AG04450 (cell line): ENCODE measurements at regions of chr14 and their contacts with region 1.

Region 1: DNA sequence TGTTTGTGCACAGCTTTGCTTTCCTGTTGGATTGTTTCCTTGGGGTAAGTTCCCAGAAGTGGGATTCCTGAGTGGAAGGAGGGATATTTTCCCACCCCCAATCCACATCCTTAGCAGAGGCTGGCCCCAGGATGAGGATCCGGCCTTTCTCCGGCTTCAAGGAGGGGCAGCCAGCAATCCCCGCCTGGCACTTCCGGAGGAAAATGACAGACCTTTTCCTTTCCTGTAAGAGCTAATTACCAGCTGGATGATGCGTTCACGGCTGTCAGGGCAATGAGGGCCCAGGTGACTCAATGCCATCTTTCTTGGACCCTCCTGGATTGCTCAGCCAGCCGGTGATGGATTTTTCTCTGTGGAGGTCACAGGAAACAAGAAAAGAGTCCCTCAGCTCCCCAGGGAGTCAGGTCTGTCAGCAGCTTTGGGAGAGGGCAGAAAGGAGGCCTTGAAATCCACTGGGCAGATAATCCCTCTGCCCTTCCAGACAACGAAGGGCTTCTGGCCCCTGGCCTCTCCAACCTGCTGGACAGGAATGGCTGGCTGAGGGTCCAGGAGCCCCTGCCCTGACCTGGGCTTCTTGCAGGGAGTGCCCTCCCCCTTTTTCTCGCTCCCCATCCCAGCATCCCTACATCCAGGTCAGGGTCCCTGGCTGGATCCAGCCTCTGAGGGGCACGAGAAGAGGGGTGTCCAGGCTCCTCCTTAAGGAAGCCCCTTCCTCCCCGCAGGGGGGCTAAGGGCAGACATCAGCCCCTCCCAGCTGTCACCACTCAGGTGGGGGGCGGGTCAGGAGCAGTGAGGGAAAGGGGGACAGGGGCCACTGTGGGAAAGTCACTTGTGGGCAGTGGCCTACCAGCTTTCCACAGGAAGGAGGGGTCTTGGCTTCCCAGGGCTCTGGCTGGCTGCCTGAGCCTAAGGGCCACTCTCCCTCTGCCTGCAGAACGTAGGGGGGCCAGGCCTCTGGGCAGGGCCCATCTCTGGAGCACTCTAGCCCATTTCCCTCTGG is 16.1 kb upstream of the CCDC85C start:
- DNase-seq: no peak
- H3K4me3 ChIP-seq: no peak overlapping the region
- H3K27ac ChIP-seq: peak overlapping the region; percentile 31
- H3K27me3 ChIP-seq: no peaks in the 10 kb centered on the region
- CTCF ChIP-seq: no peak

Region 2: DNA sequence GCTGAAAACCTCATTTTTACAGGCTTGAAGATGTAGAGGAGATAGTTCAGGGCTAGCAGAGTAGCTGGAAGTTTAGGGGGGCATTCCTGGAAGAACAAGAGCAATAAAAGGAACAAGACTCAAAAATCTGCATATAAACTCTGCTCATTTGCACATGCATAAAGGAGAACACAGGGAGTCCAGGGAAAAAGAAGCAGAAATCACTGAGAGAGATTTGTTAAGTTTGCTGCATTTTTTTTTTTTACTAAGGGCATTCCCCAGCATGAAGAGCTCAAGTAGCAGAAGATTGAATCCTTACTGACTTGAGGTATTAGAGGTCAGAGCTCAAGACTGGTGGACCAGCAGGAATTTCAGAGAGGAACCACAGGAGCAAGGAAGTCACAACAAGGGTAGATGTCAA is 319.9 kb before region 1 on chr14:
- CTCF ChIA-PET with region 1: no interaction called
- POLR2A ChIA-PET with region 1: no interaction called
- DNase-seq: no peak
- H3K4me3 ChIP-seq: no peak overlapping the region
- H3K27ac ChIP-seq: no peak overlapping the region
- H3K27me3 ChIP-seq: no peaks in the 10 kb centered on the region
- CTCF ChIP-seq: no peak

Region 3: GRCh38 chr14:99327063-99327843 is 292.9 kb before region 1 on chr14:
- CTCF ChIA-PET with region 1: no interaction called
- POLR2A ChIA-PET with region 1: no interaction called
- DNase-seq: no peak
- H3K4me3 ChIP-seq: no peak overlapping the region
- H3K27ac ChIP-seq: no peak overlapping the region
- H3K27me3 ChIP-seq: no peaks in the 10 kb centered on the region
- CTCF ChIP-seq: no peak

Region 4: GRCh38 chr14:99609245-99610117 is 10.7 kb before region 1 on chr14:
- CTCF ChIA-PET with region 1: interaction called, 10 read pairs
- POLR2A ChIA-PET with region 1: interaction called, 3 read pairs
- DNase-seq: no peak
- H3K4me3 ChIP-seq: no peak overlapping the region
- H3K27ac ChIP-seq: no peak overlapping the region
- H3K27me3 ChIP-seq: no peaks in the 10 kb centered on the region
- CTCF ChIP-seq: peak; percentile 67

Region 5: GRCh38 chr14:99676673-99677072 is 56.5 kb after region 1 on chr14:
- CTCF ChIA-PET with region 1: no interaction called
- POLR2A ChIA-PET with region 1: no interaction called
- DNase-seq: no peak
- H3K4me3 ChIP-seq: no peak overlapping the region
- H3K27ac ChIP-seq: no peak overlapping the region
- H3K27me3 ChIP-seq: peaks cover 20% of the 10 kb centered on the region
- CTCF ChIP-seq: no peak